Natural killer cell (primary cell): ENCODE measurements at regions of chr3 and their contacts with region 1.

Region 1: GRCh38 chr3:141460097-141460704 is 26.6 kb upstream of the RASA2 start:
- DNase-seq: peak; percentile 78 to 92
- ATAC-seq: peak; percentile 96 to 100 (median 100)
- H3K4me3 ChIP-seq: no peak overlapping the region
- H3K4me3 Mint-ChIP-seq: no peak overlapping the region
- H3K27ac ChIP-seq: no peak overlapping the region
- H3K27ac Mint-ChIP-seq: no peak overlapping the region
- H3K4me1 ChIP-seq: peaks cover 1% of the 10 kb centered on the region
- H3K4me1 Mint-ChIP-seq: peaks cover under 1 to 5% of the 10 kb centered on the region in 2 donors
- H3K27me3 ChIP-seq: no peaks in the 10 kb centered on the region
- H3K27me3 Mint-ChIP-seq: peaks cover 0 to 2% of the 10 kb centered on the region in 2 donors
- CTCF ChIP-seq: peak; percentile 86

Region 2: DNA sequence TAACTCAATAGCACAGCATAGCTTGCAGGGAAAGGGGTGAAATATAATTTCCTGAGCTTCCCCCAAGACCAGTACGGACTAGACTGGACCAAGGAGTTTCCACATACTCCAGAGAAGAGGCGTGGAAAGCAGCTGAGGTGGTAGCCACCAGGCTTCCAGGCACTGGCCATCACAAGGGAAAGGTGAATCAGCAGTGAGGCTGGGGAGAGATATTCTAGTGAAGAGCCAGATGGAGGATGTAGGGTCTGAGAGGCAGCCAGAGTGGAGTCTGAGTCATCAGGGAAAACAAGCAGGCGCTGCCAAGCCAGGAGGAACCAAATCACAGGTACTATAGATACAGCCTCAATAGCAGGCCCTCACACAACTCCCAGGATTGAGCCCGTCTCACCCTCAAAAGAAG is 17.0 kb after region 1 on chr3:
- intact Hi-C with region 1: loop called (anchors 2 kb)
- DNase-seq: no peak
- ATAC-seq: peak in 1 of 3 donors; percentile 17
- H3K4me3 ChIP-seq: no peak overlapping the region
- H3K4me3 Mint-ChIP-seq: no peak overlapping the region
- H3K27ac ChIP-seq: no peak overlapping the region
- H3K27ac Mint-ChIP-seq: no peak overlapping the region
- H3K4me1 ChIP-seq: peaks cover 32% of the 10 kb centered on the region
- H3K4me1 Mint-ChIP-seq: peaks cover 41 to 42% of the 10 kb centered on the region in 2 donors
- H3K27me3 ChIP-seq: no peaks in the 10 kb centered on the region
- H3K27me3 Mint-ChIP-seq: peaks cover 0 to 2% of the 10 kb centered on the region in 2 donors
- CTCF ChIP-seq: no peak

Region 3: DNA sequence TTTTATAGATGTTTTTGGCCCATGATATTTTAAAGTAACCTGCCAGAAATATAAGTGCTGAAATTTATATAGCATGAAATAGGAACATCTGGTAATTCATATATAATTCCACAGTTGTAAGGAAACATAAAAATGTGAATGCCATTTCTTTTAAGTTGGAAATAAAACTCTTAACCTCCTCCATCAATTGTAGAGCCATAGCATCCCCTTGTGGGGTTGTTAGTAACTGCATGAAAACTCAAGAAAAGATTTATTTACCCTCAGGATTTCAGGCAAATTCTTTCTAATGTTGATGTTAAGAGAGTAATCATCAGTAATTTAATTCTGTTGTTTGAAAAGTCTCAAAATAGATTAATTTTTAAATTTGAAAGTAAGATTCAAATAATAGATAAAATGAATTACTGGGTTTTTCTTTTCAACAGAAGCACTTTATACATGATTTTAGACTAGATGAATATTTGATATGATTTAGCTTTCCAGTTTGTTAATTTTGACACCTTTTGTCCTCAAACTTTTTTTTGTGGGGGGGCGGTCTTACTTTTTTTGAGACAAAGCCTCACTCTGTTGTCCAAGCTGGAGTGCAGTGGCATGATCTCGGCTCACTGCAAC is 101.3 kb after region 1 on chr3:
- intact Hi-C with region 1: loop called (anchors 1 kb)
- DNase-seq: peak in 1 of 2 donors; percentile 87
- ATAC-seq: peak; percentile 73 to 85 (median 77)
- H3K4me3 ChIP-seq: no peak overlapping the region
- H3K4me3 Mint-ChIP-seq: no peak overlapping the region
- H3K27ac ChIP-seq: no peak overlapping the region
- H3K27ac Mint-ChIP-seq: peak overlapping the region; percentile 39 to 79
- H3K4me1 ChIP-seq: no peaks in the 10 kb centered on the region
- H3K4me1 Mint-ChIP-seq: peaks cover 19% of the 10 kb centered on the region in 2 donors
- H3K27me3 ChIP-seq: no peaks in the 10 kb centered on the region
- H3K27me3 Mint-ChIP-seq: no peaks in the 10 kb centered on the region
- CTCF ChIP-seq: peak; percentile 100

Region 4: DNA sequence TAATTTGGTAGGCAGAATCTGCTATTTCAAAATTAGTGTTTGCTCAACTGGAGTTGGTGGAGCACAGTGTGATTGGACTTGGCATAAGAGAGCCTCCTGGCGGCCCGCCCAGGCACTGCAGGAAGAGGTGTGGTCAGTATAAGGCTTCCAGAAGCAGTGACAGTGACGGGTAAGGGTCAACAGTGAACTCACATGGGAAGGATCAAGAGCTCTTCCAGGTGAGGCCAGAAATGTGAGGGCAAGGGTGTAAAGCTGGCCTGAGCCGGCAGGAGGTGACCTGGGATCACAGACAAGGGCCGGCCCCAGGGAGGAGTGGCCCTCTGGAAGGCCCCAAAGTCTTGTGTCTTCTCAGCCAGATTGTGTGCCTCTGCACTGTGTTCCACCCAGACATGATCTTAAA is 184.7 kb after region 1 on chr3:
- intact Hi-C with region 1: loop called (anchors 1 kb)
- DNase-seq: peak; percentile 69 to 72
- ATAC-seq: peak; percentile 88 to 98 (median 98)
- H3K4me3 ChIP-seq: no peak overlapping the region
- H3K4me3 Mint-ChIP-seq: no peak overlapping the region
- H3K27ac ChIP-seq: no peak overlapping the region
- H3K27ac Mint-ChIP-seq: no peak overlapping the region
- H3K4me1 ChIP-seq: no peaks in the 10 kb centered on the region
- H3K4me1 Mint-ChIP-seq: peaks cover 0 to 6% of the 10 kb centered on the region in 2 donors
- H3K27me3 ChIP-seq: no peaks in the 10 kb centered on the region
- H3K27me3 Mint-ChIP-seq: peaks cover 0 to 3% of the 10 kb centered on the region in 2 donors
- CTCF ChIP-seq: peak; percentile 86

Region 5: GRCh38 chr3:141913150-141913811 is 453.1 kb after region 1 on chr3:
- intact Hi-C with region 1: loop called (anchors 1 kb)
- DNase-seq: peak in 1 of 2 donors; percentile 79
- ATAC-seq: peak; percentile 82 to 96 (median 91)
- H3K4me3 ChIP-seq: no peak overlapping the region
- H3K4me3 Mint-ChIP-seq: no peak overlapping the region
- H3K27ac ChIP-seq: no peak overlapping the region
- H3K27ac Mint-ChIP-seq: peak overlapping the region in 1 of 2 donors; percentile 25
- H3K4me1 ChIP-seq: no peaks in the 10 kb centered on the region
- H3K4me1 Mint-ChIP-seq: peaks cover 6% of the 10 kb centered on the region in 2 donors
- H3K27me3 ChIP-seq: no peaks in the 10 kb centered on the region
- H3K27me3 Mint-ChIP-seq: no peaks in the 10 kb centered on the region
- CTCF ChIP-seq: peak; percentile 80